Dorsolateral prefrontal cortex (tissue), 120 donors: ENCODE measurements at regions of chr22 and their contacts with region 1.

Region 1: GRCh38 chr22:20079745-20080444 is at the start of gene DGCR8:
- DNase-seq: peak; percentile 87 to 97 (median 94)
- H3K4me3 ChIP-seq: peak within 1 kb of the TSS; percentile 62 to 96 (median 86)
- H3K27ac ChIP-seq: peak within 1 kb of the TSS; percentile 49 to 99 (median 91)
- H3K27me3 ChIP-seq: no peaks in the 10 kb centered on the region
- CTCF ChIP-seq: peak in 32 of 56 donors; percentile 2 to 51 (median 28)
- total RNA-seq, gene DGCR8: 27.2 to 57.7 (median 37.4) TPM

Region 2: DNA sequence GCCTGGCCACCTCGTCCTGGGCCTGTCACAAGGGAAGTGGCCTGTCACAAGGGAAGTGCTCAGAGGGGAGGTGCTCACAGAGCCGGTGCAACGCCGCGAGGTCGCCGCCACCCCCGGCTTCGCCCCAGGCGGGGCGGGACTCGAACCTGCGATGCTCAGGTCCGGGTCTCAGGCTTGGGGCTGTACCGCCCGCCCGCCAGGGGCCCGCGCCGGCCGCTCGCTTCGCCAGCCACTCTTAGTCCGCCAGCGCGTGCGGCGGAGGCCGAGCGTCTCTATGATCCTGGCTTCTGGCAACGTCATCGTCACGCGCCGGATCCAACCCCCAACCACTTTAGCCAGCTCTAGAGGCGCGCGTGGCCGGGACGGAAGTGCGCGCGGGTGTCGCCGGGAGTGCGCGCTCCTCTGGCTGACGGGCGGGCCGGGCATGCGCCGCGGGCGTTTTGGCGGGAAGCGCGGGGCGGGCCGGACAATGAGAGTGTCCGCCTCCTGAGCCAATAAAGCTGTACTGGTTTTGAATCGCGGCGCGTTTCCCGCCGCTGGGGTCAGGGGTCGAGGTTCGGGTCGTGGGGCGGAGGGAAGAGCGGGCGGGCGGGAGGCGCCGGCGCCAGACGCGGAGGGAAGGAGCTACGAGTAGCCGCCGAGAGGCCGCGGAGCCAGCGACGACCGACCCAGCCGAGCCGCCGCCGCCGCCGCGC is 37.2 kb after region 1 on chr22 and contains the start of gene TRMT2A:
- intact Hi-C with region 1: loop called (anchors 1 to 2 kb)
- DNase-seq: peak; percentile 95 to 99 (median 96)
- H3K4me3 ChIP-seq: peak within 1 kb of the TSS; percentile 50 to 98 (median 87)
- H3K27ac ChIP-seq: peak within 1 kb of the TSS; percentile 20 to 96 (median 84)
- H3K27me3 ChIP-seq: no peaks in the 10 kb centered on the region
- CTCF ChIP-seq: peak in 44 of 56 donors; percentile 8 to 63 (median 36)
- total RNA-seq, gene TRMT2A: 33.1 to 73.3 (median 50.4) TPM